Activated CD4-positive, alpha-beta T cell treated with anti-CD3 and anti-CD28 coated beads for 36 hours (primary cell): ENCODE measurements at regions of chr2 and their contacts with region 1.

Region 1: DNA sequence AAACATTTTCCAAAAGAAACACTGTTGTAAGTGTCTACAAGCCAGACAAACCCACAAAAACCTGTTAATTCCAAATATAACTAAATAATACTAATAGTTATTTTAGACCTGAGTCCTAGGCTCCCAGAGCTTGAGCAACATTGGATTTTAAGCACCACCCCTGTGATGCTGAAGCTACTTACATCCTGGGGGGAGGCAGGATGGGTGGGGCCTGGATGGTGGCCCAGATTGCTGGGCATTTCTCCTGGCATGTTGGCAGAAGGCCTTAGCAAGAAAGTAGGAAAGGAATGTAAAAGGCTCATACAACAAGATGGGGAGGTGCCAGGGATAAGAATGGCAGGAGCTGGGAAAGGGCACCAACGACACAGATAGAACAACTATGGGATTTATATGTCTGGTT is 50.7 kb upstream of the OTX1 start:
- DNase-seq: no peak
- ATAC-seq: no peak
- H3K4me3 Mint-ChIP-seq: no peak overlapping the region
- H3K27ac Mint-ChIP-seq: no peak overlapping the region
- H3K4me1 Mint-ChIP-seq: no peaks in the 10 kb centered on the region
- H3K27me3 Mint-ChIP-seq: no peaks in the 10 kb centered on the region

Region 2: DNA sequence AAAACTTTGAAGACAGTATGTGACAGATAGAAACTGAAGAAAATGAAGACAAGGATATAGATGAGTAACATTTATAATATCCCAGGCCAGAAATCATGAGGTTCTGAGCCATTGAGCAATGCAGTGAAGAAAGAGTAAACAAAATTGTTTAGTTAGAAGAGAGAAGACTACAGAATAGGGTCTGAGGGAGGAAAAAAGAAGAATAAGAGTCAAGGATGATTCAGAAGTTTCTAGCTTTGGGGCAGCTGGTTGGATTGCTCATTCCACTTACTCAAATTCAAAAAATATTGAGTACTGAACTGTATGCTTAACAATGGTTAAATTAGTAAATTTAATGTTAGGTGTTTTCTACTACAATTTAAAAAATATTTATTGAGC is 104.3 kb before region 1 on chr2:
- CTCF ChIA-PET with region 1: no interaction called
- POLR2A ChIA-PET with region 1: no interaction called
- intact Hi-C with region 1: loop called in 1 of 2 experiments (anchors 5 kb)
- DNase-seq: no peak
- ATAC-seq: no peak
- H3K4me3 Mint-ChIP-seq: no peak overlapping the region
- H3K27ac Mint-ChIP-seq: no peak overlapping the region
- H3K4me1 Mint-ChIP-seq: no peaks in the 10 kb centered on the region
- H3K27me3 Mint-ChIP-seq: no peaks in the 10 kb centered on the region

Region 3: DNA sequence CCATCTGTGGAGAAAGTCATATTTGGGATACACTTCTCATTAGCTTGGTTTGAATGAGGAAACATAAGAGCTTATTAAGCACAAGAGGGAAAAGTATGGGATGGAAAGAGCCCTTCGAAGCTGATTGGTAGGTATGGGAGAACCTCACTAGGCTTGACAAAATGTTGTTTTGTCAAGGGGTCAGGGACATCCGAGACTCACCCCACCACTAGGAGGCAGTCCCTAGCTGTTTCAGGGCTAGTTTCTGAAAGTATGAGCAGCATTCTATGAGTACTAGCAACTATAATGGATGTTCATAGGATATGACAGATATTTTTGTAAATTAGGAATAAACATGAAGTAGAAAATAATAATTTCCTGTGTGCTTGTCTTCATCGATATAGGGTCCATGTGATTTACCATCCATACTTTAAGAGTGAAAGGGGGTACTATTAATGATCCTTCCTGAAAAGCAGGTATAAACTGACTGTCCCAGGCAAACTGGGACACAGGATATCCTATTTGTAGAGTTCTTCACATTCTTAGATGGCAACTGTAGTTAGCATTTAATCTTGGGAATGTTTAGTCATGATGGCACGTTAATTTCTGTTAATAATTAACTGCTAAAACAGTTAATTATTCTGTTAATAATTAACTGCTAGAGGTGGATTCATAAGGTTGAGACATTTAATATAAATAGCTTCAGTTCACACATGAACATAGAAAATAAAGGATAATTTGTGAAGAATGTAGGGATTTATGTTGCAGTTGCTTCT is 79.1 kb after region 1 on chr2:
- CTCF ChIA-PET with region 1: no interaction called
- POLR2A ChIA-PET with region 1: no interaction called
- intact Hi-C with region 1: no loop called
- DNase-seq: peak; percentile 35
- ATAC-seq: no peak
- H3K4me3 Mint-ChIP-seq: no peak overlapping the region
- H3K27ac Mint-ChIP-seq: no peak overlapping the region
- H3K4me1 Mint-ChIP-seq: no peaks in the 10 kb centered on the region
- H3K27me3 Mint-ChIP-seq: peaks cover 27% of the 10 kb centered on the region